ENCODE measurements at regions of chr15 and their contacts with region 1.

Region 1: GRCh38 chr15:62426387-62426956 is 261.4 kb upstream of the C2CD4B start:
- DNase-seq: no peak
- ATAC-seq: no peak
- H3K4me3 ChIP-seq: no peak overlapping the region
- H3K27ac ChIP-seq: no peak overlapping the region
- H3K4me1 ChIP-seq: peaks cover 3 to 40% (median 21%) of the 10 kb centered on the region in 9 donors
- H3K27me3 ChIP-seq: no peaks in the 10 kb centered on the region
- CTCF ChIP-seq: no peak

Region 2: GRCh38 chr15:62362608-62363007 is 63.9 kb before region 1 on chr15:
- intact Hi-C with region 1: loop called in 1 of 10 experiments (anchors 10 kb)
- DNase-seq: no peak
- ATAC-seq: peak in 1 of 8 donors; percentile 58
- H3K4me3 ChIP-seq: no peak overlapping the region
- H3K27ac ChIP-seq: no peak overlapping the region
- H3K4me1 ChIP-seq: no peaks in the 10 kb centered on the region
- H3K27me3 ChIP-seq: peaks cover 0 to 21% (median 0%) of the 10 kb centered on the region in 7 donors
- CTCF ChIP-seq: no peak